K562 (cell line): ENCODE measurements at regions of chr5 and their contacts with region 1.

Region 1: DNA sequence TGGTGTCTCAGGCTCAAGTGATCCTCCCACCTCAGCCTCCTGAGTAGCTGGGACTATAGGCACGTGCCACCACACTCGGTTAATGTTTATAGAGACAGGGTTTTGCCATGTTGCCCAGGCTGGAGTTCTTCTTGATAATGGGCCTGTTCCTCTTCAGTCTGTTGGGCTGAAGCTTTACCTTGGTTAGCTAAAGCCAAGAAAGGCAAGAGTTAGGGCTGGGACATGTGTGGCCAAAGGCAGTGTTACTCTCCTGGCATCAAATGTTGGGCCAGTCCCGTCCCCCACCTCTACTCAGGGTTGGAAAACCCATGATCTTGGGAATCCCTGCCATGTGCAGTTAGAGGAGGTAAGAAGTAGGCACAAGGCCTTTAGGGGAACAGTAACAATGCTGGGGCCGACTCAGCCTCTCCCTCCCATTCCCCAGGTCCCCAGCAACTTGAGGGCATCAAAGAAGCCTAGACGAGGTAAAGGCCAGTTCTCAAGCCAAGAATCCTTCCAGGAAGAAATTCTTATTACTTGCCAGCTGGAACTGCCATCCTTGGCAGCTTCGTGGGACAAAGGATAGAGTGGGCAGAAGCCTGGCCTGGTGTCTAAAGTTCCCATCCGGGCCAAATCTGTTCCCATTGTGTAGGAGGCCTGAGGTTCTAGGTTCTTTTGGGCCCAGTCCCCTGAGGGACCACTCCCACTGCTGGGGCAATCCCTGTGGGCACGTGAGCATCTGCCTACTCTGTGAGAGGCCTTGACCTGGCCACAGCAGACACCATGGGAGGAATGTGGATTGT is 4.5 kb downstream of the EGR1 start:
- DNase-seq: peak in 1 of 4 experiments; percentile 44
- ATAC-seq: peak; percentile 24
- H3K4me3 ChIP-seq: no peak overlapping the region
- H3K27ac ChIP-seq: no peak overlapping the region
- H3K4me1 ChIP-seq: peaks cover 19 to 29% of the 10 kb centered on the region in 2 experiments; a peak in 4 of 5 replicates
- H3K27me3 ChIP-seq: no peaks in the 10 kb centered on the region
- CTCF ChIP-seq: no peak
- EP300 ChIP-seq: peak; percentile 19; the same call in 1 of the 2 replicates
- POLR2A ChIP-seq: peak; percentile 99
- RAD21 ChIP-seq: no peak

Region 2: DNA sequence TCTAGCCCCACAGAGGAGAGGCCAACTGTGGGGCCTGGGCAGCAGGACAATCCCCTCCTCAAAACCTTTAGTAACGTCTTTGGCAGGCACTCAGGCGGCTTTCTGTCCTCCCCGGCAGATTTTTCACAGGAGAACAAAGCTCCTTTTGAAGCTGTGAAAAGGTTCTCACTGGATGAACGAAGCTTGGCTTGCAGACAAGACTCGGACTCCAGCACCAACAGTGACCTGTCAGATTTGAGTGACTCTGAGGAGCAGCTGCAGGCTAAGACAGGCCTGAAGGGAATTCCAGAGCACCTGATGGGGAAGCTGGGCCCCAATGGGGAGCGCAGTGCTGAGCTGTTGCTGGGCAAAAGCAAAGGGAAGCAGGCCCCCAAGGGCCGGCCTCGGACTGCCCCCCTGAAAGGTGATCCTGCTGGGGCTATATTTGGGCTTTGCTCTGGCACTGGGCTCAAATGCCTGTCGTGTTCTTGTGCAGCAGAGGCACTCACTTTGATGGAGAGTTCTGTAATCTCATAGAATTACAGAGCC is 77.8 kb before region 1 on chr5:
- CTCF ChIA-PET with region 1: no interaction called
- POLR2A ChIA-PET with region 1: no interaction called
- in situ Hi-C with region 1: no loop called
- intact Hi-C with region 1: no loop called
- DNase-seq: no peak
- ATAC-seq: no peak
- H3K4me3 ChIP-seq: no peak overlapping the region
- H3K27ac ChIP-seq: no peak overlapping the region
- H3K4me1 ChIP-seq: no peaks in the 10 kb centered on the region
- H3K27me3 ChIP-seq: no peaks in the 10 kb centered on the region
- CTCF ChIP-seq: no peak
- EP300 ChIP-seq: no peak
- POLR2A ChIP-seq: no peak
- RAD21 ChIP-seq: no peak

Region 3: DNA sequence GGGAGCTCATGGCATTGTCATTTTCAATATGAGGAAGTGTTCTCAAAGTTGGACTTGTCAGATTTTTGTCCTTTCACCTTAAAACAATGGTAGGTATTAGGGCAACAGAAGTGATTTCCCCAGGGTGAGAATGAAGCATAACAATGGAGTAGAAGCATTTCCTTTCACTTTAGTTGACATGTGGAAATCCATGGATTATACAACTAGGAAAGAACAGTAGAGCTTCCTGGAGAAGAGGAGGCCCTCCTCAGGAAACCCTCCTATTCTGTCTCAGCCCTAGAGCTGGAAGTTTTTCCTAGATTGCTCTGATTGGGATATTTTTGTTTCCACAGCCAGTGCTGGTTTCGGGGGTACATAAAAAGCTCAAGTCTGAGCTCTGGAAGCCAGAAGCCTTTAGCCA is 44.7 kb before region 1 on chr5:
- CTCF ChIA-PET with region 1: no interaction called
- POLR2A ChIA-PET with region 1: no interaction called
- in situ Hi-C with region 1: no loop called
- intact Hi-C with region 1: no loop called
- DNase-seq: no peak
- ATAC-seq: no peak
- H3K4me3 ChIP-seq: no peak overlapping the region
- H3K27ac ChIP-seq: no peak overlapping the region
- H3K4me1 ChIP-seq: no peaks in the 10 kb centered on the region
- H3K27me3 ChIP-seq: no peaks in the 10 kb centered on the region
- CTCF ChIP-seq: no peak
- EP300 ChIP-seq: no peak
- POLR2A ChIP-seq: no peak
- RAD21 ChIP-seq: no peak

Region 4: GRCh38 chr5:138491669-138492559 is 22.2 kb after region 1 on chr5:
- CTCF ChIA-PET with region 1: no interaction called
- POLR2A ChIA-PET with region 1: interaction called, 14 read pairs
- in situ Hi-C with region 1: no loop called
- intact Hi-C with region 1: loop called (anchors 2 kb)
- DNase-seq: peak; percentile 88 to 91 (median 90)
- ATAC-seq: peak; percentile 90
- H3K4me3 ChIP-seq: peak overlapping the region; percentile 49
- H3K27ac ChIP-seq: peak overlapping the region; percentile 78
- H3K4me1 ChIP-seq: peaks cover 51 to 54% of the 10 kb centered on the region in 2 experiments
- H3K27me3 ChIP-seq: no peaks in the 10 kb centered on the region
- CTCF ChIP-seq: no peak
- EP300 ChIP-seq: 0 out of 2 replicates have a peak, but pooled peaks have one; percentile 6
- POLR2A ChIP-seq: peak; percentile 29; the same call in 1 of the 2 replicates
- RAD21 ChIP-seq: peak in 1 of 2 experiments; percentile 3; a peak in 2 of 4 replicates